Sigmoid colon (tissue), 7 donors: ENCODE measurements at regions of chr7 and their contacts with region 1.

Region 1: DNA sequence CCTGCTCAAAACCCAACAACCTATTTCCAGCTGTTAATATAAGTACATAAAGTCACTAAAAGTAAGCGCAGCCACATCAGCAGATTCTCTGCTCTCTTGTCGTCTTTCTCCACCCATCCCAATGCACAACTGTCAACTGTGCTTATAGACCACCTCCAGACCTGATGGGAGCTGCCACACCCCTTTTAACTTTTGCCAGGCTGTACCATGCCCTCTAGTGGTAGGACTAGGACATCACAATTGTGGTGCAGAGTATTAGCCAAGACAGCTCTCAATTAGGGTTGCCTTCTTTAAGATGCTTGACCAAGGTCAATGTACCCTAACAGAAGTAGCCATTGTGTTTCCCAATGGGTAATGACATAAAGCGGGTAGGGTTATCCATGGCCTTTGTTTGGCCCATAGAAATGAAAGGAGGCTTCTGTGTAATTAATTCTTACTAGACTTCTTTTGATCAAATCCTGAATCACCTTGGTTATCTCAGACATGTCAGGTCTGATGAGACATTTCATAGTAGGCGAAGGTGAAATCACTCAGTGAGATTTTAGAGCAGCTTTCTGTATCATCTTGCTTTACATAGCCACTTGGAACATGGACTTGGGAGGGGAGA is 68.1 kb downstream of the SCRN1 start:
- DNase-seq: no peak
- H3K4me3 ChIP-seq: no peak overlapping the region
- H3K27ac ChIP-seq: no peak overlapping the region
- H3K4me1 ChIP-seq: peaks cover 0 to under 1% (median 0%) of the 10 kb centered on the region in 4 donors
- H3K27me3 ChIP-seq: no peaks in the 10 kb centered on the region
- CTCF ChIP-seq: peak; percentile 61 to 92 (median 82)
- EP300 ChIP-seq: no peak
- POLR2A ChIP-seq: no peak

Region 2: DNA sequence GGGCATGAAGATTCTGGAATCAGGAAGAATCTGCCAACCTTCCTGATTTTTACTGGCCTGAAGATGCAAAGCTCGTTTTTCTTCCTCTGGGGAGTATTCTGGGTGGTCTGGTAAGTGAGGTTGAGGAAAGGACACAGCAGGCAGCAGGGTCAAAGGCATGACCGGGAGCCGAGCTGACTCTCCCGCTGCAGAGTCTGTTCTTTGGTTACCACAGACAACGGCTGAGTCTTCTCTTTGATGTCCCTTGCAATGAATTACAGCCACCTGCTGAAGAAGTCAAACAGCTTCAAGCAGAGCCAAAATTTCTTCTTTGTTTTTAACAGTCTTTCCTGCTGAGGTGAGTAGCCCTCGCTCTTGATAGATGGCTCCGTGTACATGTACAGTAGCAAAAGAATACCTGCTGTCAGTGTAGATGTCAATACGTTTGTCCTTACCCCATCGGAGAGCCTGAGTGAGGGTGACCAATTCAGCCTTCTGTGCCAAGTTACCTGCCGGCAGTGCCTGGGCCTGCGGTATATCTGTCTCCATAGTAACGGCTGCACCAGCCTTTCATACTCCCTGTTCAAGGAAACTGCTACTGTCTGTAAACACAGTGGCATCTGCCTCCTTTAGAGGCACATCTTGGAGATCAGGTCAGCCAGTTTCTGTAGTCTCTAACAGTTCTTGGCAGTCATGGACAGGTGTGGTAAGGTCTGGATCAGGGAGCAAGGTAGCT is 281.5 kb before region 1 on chr7:
- intact Hi-C with region 1: loop called (anchors 5 kb)
- DNase-seq: no peak
- H3K4me3 ChIP-seq: no peak overlapping the region
- H3K27ac ChIP-seq: no peak overlapping the region
- H3K4me1 ChIP-seq: peaks cover 0 to 7% (median 6%) of the 10 kb centered on the region in 4 donors
- H3K27me3 ChIP-seq: no peaks in the 10 kb centered on the region
- CTCF ChIP-seq: no peak
- EP300 ChIP-seq: no peak
- POLR2A ChIP-seq: no peak

Region 3: GRCh38 chr7:29748286-29749108 is 173.0 kb before region 1 on chr7:
- intact Hi-C with region 1: loop called (anchors 2 kb)
- DNase-seq: no peak
- H3K4me3 ChIP-seq: no peak overlapping the region
- H3K27ac ChIP-seq: peak overlapping the region in 1 of 4 donors; percentile 57
- H3K4me1 ChIP-seq: peaks cover 0 to 12% (median 4%) of the 10 kb centered on the region in 4 donors
- H3K27me3 ChIP-seq: no peaks in the 10 kb centered on the region
- CTCF ChIP-seq: peak; percentile 9 to 53 (median 22)
- EP300 ChIP-seq: no peak
- POLR2A ChIP-seq: no peak

Region 4: DNA sequence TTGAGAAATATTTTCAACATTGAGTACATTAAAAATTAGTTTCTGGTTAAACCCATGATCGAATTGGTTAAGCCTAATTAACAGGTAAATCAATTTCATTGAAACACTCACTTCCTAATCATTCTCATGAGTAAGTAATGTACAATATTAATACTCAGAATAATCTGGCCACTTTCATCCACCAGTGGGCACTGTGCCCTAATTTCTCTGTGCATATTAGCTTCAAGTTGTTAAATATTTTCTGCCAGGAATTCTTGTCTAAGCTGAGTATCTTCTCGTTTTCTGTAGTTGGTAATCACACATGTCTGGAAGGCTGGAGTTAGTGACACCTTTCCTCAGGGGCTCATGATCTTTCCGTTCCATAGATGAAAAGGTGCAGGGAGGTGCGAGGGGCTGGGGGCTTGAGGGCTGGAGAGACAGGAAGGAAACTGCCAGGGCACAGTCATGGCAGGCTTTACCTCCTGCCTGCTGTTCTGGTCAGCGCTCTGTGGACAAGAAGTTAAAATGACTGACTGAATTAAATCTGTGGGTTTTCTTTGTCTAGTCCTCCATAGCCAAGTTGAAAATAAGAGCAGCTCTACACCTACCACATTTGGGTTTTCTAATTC is 43.3 kb before region 1 on chr7:
- intact Hi-C with region 1: loop called (anchors 5 kb)
- DNase-seq: no peak
- H3K4me3 ChIP-seq: no peak overlapping the region
- H3K27ac ChIP-seq: no peak overlapping the region
- H3K4me1 ChIP-seq: peaks cover 0 to 4% (median 0%) of the 10 kb centered on the region in 4 donors
- H3K27me3 ChIP-seq: peaks cover 0 to under 1% (median 0%) of the 10 kb centered on the region in 3 donors
- CTCF ChIP-seq: peak in 2 of 4 experiments; percentile 34 to 47
- EP300 ChIP-seq: no peak
- POLR2A ChIP-seq: no peak

Region 5: DNA sequence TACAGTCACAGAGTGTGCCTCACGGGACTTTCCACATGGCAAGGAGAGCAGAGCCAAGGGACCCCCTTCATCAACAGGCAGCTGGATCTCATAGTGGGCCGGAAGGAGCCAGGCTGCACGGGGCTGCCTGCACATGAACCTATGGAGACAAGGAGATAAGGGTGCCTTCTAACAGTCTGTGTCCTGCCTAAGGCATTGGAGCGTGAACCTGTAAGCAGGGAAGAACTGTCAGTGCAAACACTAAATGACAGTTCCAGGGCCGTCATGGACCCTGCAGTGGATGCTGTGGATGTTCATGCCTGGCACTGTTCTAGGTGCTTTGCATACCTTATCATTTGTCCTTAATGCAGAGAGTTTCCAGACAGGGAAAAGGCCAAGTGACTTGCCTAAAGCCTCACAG is 29.3 kb before region 1 on chr7:
- intact Hi-C with region 1: no loop called
- DNase-seq: no peak
- H3K4me3 ChIP-seq: no peak overlapping the region
- H3K27ac ChIP-seq: no peak overlapping the region
- H3K4me1 ChIP-seq: peaks cover 0 to 21% (median 10%) of the 10 kb centered on the region in 4 donors
- H3K27me3 ChIP-seq: no peaks in the 10 kb centered on the region
- CTCF ChIP-seq: no peak
- EP300 ChIP-seq: no peak
- POLR2A ChIP-seq: no peak